Posterior vena cava (tissue), 2 donors: ENCODE measurements at regions of chr4 and their contacts with region 1.

Region 1: GRCh38 chr4:52618795-52619590 is 40.1 kb downstream of the USP46 start:
- DNase-seq: no peak

Region 2: GRCh38 chr4:52135171-52135570 is 483.8 kb before region 1 on chr4:
- intact Hi-C with region 1: no loop called
- DNase-seq: no peak

Region 3: DNA sequence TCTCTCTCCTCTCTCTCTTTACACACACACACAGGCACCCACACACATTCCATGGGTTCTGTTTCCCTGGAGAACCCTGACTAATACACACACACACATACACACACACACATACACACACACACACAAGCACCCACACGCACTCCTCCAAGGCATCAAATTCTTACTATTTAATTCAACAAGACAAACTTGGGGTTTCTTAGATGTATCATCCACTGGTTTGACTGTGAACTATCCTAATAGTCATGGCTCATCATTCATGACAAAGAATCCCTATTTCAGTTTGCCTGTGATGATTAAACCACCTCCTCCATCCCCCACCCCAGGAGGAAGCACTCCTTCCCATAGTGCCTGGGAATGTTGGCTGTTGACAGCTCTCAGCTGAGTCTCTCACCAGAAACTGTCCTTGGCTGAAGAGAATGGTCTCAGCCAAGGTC is 58.1 kb before region 1 on chr4:
- intact Hi-C with region 1: no loop called
- DNase-seq: no peak

Region 4: DNA sequence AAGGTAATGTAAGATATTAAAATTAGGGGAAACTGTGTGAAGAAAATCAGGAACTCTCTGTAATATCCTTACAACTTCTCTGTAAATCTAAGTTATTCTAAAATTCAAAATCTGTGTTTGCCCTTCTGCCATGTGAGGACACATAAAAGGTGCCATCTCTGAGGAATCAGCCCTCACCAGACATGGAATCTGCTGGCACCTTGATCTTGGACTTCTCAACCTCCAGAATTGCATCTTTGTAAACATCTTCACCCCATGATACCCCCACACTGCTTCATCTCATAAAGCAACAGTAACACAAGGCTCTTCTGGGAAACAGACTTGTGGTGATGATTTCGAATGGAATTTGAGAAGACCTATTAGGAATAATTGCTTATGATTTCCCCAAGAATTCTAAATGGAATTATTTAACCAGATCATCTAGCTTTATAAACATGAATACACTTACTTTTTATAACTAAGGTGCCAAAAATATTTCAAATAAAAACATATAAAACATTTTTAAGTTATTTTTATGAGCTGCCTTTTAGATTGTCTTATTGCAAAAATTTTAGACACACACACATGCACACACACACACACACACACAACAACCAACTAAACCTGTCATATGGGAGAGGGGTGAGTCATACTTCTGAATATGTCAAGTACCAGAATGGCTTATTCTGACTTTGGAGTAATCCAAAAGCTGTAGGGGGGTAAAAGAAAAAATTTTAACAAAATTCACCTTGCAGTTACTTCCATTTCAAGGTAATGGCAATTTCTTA is 42.0 kb before region 1 on chr4:
- intact Hi-C with region 1: loop called in 1 of 2 experiments (anchors 1 kb)
- DNase-seq: no peak